Mammary epithelial cell (primary cell): ENCODE measurements at regions of chr4 and their contacts with region 1.

Region 1: GRCh38 chr4:145618932-145619638 is at the start of gene MMAA:
- DNase-seq: peak; percentile 87
- H3K4me3 ChIP-seq: peak within 1 kb of the TSS; percentile 71 to 100 (median 96)
- H3K27ac ChIP-seq: peak within 1 kb of the TSS; percentile 98
- H3K4me1 ChIP-seq: peaks cover 19% of the 10 kb centered on the region
- H3K27me3 ChIP-seq: no peaks in the 10 kb centered on the region
- CTCF ChIP-seq: peak; percentile 25 to 55
- total RNA-seq, gene MMAA: 5.3 to 8.4 TPM

Region 2: GRCh38 chr4:145234091-145234706 is 384.9 kb before region 1 on chr4:
- CTCF ChIA-PET with region 1: interaction called, 17 read pairs
- dilution Hi-C with region 1: loop called (anchors 25 kb)
- in situ Hi-C with region 1: no loop called
- intact Hi-C with region 1: no loop called
- DNase-seq: peak; percentile 43
- H3K4me3 ChIP-seq: no peak overlapping the region
- H3K27ac ChIP-seq: no peak overlapping the region
- H3K4me1 ChIP-seq: no peaks in the 10 kb centered on the region
- H3K27me3 ChIP-seq: no peaks in the 10 kb centered on the region
- CTCF ChIP-seq: peak; percentile 94 to 95

Region 3: GRCh38 chr4:145347684-145348083 is 271.4 kb before region 1 on chr4:
- CTCF ChIA-PET with region 1: no interaction called
- dilution Hi-C with region 1: no loop called
- in situ Hi-C with region 1: no loop called
- intact Hi-C with region 1: no loop called
- DNase-seq: peak; percentile 12
- H3K4me3 ChIP-seq: no peak overlapping the region
- H3K27ac ChIP-seq: no peak overlapping the region
- H3K4me1 ChIP-seq: no peaks in the 10 kb centered on the region
- H3K27me3 ChIP-seq: no peaks in the 10 kb centered on the region
- CTCF ChIP-seq: no peak

Region 4: DNA sequence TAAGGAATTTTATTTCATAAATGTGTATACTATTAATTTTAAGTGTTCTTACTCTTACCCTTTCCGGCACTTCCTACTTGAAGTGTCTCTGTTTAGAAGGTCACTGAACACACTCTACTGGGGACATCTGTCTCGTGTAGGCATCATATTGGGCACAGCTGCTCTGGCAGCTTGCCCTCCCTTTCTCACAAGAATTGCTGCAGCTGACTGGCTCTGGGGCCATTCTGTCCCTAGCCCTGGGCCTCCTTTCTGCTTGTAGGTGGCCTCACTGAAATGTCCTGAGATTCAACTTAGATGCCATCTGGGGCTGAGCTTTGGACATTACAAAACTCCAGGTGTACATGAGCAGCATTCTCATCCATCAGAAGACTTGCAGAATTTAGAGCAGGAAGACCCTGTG is 87.9 kb before region 1 on chr4:
- CTCF ChIA-PET with region 1: no interaction called
- dilution Hi-C with region 1: no loop called
- in situ Hi-C with region 1: no loop called
- intact Hi-C with region 1: no loop called
- DNase-seq: no peak
- H3K4me3 ChIP-seq: no peak overlapping the region
- H3K27ac ChIP-seq: no peak overlapping the region
- H3K4me1 ChIP-seq: peaks cover 9% of the 10 kb centered on the region
- H3K27me3 ChIP-seq: no peaks in the 10 kb centered on the region
- CTCF ChIP-seq: no peak

Region 5: DNA sequence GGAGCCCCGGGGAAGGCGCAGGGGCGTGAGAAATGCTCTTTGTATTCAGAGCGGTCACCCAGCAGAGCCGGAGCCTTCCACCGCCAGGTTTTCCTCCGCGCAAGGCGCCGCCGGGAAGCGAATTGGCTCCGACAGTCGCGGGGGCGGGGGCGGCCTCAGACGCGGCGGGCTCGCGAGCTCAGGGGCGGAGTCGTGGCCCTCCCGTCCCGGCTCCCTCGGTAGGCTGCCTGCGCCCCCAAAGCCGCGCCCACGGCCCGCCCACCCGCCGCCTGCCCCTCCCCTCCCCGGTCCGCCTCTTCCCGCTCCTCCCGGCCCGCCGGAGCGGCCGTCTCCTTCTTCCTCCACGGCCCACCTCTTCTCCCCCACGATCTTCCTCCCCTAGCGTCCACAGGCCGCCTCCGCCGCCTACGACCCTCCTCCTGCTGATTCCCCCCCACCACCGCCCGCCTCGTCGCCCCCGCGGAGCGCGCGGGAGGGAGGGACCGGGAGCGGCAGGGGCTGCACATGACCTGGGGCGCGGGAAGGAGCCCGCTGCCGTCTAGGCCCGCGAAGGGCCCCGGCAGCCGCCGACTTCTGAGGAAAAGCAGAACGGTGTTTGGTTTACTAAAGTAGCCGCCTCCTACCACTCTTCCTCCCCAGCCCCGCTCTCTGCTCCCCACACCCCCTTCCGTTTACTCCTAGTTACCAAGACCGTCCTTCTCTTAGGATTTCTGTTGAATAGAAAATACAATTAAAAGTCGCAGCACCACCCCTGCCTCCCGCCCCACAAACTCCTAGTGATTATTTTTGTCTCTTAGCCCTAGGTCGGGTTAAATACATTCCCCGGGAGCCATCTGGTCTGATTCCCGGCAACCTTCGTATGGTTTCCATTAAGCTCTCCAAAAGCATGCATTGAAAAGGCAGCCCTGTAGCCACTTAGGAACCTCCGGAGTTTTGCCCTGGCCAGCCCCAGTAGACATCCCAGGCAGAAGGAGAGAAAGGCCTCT is 114.1 kb after region 1 on chr4:
- CTCF ChIA-PET with region 1: no interaction called
- dilution Hi-C with region 1: no loop called
- in situ Hi-C with region 1: no loop called
- intact Hi-C with region 1: loop called (anchors 1 kb)
- DNase-seq: peak; percentile 95
- H3K4me3 ChIP-seq: peak overlapping the region; percentile 36 to 61 (median 50)
- H3K27ac ChIP-seq: peak overlapping the region; percentile 99
- H3K4me1 ChIP-seq: peaks cover 35% of the 10 kb centered on the region
- H3K27me3 ChIP-seq: no peaks in the 10 kb centered on the region
- CTCF ChIP-seq: no peak

Region 6: DNA sequence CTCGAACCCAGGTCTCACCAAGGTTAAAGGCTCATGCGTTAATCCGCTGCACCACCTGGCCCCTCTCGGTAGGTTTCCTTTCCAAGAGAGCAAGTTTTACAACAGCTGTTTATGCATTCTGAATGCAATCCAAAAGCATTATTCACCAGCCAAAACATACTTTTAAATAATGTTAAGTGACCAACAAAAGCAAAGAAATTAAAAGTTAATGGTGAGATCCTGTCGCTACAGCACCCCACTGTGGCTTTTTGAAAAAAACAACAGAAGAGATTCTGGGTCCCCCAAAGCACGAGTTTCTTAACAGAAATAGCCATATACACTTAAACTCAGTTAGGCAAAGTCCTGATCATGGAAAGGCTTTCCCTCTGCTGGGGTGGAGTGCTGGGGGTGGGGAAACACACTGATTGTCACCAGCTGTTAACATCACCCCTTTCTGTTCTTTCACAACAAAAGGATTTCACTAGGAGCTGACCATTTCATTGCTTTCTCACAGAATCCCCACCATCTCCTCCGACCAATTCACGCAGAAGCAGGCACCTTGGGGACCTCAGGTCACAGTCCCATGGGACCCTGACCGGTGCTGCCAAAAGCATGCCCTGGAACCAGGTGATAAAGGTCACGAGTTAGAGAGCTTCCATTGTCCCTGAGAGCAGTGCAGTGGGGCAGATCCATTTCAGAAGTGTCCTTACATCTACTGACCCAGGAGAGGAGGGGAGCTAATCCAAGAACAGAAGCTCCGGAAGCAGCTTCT is 268.3 kb after region 1 on chr4:
- CTCF ChIA-PET with region 1: interaction called, 7 read pairs
- dilution Hi-C with region 1: no loop called
- in situ Hi-C with region 1: no loop called
- intact Hi-C with region 1: loop called (anchors 1 kb)
- DNase-seq: no peak
- H3K4me3 ChIP-seq: no peak overlapping the region
- H3K27ac ChIP-seq: no peak overlapping the region
- H3K4me1 ChIP-seq: peaks cover 4% of the 10 kb centered on the region
- H3K27me3 ChIP-seq: no peaks in the 10 kb centered on the region
- CTCF ChIP-seq: no peak

Region 7: DNA sequence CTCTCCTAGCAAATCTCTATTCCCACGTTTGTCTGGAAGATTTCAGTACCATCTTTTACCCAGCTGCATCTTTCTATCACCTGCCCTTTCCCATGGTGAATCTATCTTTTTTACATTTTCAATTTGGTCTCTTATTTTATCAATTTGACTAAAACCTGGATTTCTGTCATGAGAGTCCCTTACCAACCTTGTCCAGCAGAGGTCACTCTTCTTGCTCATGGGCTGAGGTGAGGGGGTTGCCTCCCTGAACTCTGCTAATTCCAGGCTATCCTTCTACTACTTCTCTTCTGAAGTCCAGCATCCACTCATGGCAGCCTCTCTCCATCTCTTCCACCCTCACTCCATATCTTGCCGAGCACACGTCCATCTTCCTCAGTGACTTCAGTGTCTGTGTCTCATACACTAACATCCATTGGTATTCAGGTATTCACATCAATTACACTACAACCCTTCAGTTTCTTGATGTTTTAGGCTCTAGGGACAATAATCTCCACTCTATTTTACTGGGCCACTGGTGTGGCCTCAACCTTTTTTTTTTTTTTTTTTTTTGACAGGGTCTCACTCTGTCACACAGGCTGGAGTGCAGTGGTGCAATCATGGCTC is 337.3 kb after region 1 on chr4:
- CTCF ChIA-PET with region 1: no interaction called
- dilution Hi-C with region 1: no loop called
- in situ Hi-C with region 1: no loop called
- intact Hi-C with region 1: loop called (anchors 5 kb)
- DNase-seq: peak; percentile 25
- H3K4me3 ChIP-seq: no peak overlapping the region
- H3K27ac ChIP-seq: no peak overlapping the region
- H3K4me1 ChIP-seq: peaks cover 27% of the 10 kb centered on the region
- H3K27me3 ChIP-seq: no peaks in the 10 kb centered on the region
- CTCF ChIP-seq: peak; percentile 71 to 76